Activated CD4-positive, alpha-beta memory T cell treated with anti-CD3 and anti-CD28 coated beads for 36 hours (primary cell): ENCODE measurements at regions of chr20 and their contacts with region 1.

Region 1: GRCh38 chr20:50338479-50339391 is 148.1 kb downstream of the CEBPB start:
- DNase-seq: peak; percentile 91
- H3K4me3 Mint-ChIP-seq: peak overlapping the region; percentile 63
- H3K27ac Mint-ChIP-seq: peak overlapping the region; percentile 96
- H3K4me1 Mint-ChIP-seq: peaks cover 37% of the 10 kb centered on the region
- H3K27me3 Mint-ChIP-seq: no peaks in the 10 kb centered on the region

Region 2: GRCh38 chr20:50286609-50287008 is 52.1 kb before region 1 on chr20:
- CTCF ChIA-PET with region 1: interaction called, 11 read pairs
- POLR2A ChIA-PET with region 1: interaction called, 26 read pairs
- intact Hi-C with region 1: loop called (anchors 1 kb)
- DNase-seq: peak; percentile 63
- H3K4me3 Mint-ChIP-seq: no peak overlapping the region
- H3K27ac Mint-ChIP-seq: peak overlapping the region; percentile 84
- H3K4me1 Mint-ChIP-seq: peaks cover 34% of the 10 kb centered on the region
- H3K27me3 Mint-ChIP-seq: peaks cover 5% of the 10 kb centered on the region

Region 3: DNA sequence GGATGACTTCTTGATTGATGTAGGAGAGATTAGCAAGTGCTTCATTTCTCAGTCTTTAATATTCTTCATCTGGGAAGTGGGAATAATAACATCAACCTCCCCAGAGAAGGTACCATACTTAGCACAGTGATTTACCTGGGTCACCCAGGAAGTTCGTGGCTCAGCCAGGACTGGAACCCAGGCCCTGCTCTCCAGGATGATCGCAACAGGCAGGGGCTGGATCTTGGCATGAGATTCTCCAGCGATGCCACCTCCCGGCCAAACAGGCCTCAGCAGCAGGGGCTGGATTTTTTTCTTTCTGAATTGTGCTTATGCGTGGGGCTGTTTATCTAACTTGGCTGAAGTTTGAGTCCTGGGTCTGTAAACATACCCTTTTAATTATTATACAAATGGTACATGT is 41.9 kb after region 1 on chr20:
- CTCF ChIA-PET with region 1: no interaction called
- POLR2A ChIA-PET with region 1: interaction called, 7 read pairs
- intact Hi-C with region 1: loop called (anchors 5 kb)
- DNase-seq: no peak
- H3K4me3 Mint-ChIP-seq: no peak overlapping the region
- H3K27ac Mint-ChIP-seq: no peak overlapping the region
- H3K4me1 Mint-ChIP-seq: peaks cover 42% of the 10 kb centered on the region
- H3K27me3 Mint-ChIP-seq: no peaks in the 10 kb centered on the region

Region 4: DNA sequence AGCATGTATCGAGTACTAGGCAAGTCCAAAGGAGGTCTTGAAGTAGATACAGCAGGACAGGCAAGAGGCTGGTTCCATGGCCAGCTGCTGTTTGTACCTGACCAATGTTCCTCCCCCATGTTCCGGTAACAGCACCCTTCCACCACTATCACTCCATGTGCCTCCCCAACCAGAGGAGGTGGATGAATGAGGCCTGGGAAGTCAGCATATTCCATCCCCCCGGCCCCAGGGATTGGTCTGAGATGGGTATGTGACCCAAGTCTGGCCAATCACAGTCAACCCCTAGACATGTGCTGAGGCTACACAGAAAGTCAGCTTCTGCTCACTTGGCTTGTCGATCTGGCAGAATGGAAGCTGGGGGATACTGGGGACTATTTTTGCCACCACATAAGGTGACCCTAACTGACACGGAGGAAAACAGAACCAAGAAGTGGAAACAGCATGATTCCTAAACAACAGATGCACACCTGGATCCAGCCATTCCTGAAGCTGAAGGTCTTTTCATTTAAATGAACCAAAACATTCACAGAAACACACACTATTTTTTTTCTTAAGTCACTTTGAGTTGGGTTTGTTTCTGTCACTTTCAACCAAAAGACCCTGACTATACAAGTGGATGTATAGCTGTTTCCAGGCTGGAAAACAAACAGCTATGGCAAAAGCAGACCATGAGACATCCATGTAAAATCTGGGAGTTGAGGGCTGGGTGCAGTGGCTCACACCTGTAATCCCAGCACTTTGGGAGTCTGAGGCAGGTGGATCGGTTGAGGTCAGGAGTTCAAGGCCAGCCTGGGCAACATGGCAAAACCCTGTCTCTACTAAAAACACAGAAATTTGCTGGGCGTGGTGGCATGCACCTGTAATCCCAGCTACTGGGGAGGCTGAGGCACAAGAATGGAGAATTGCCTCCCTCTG is 101.1 kb after region 1 on chr20:
- CTCF ChIA-PET with region 1: no interaction called
- POLR2A ChIA-PET with region 1: no interaction called
- intact Hi-C with region 1: loop called (anchors 1 kb)
- DNase-seq: no peak
- H3K4me3 Mint-ChIP-seq: no peak overlapping the region
- H3K27ac Mint-ChIP-seq: peak overlapping the region; percentile 81
- H3K4me1 Mint-ChIP-seq: peaks cover 30% of the 10 kb centered on the region
- H3K27me3 Mint-ChIP-seq: no peaks in the 10 kb centered on the region

Region 5: DNA sequence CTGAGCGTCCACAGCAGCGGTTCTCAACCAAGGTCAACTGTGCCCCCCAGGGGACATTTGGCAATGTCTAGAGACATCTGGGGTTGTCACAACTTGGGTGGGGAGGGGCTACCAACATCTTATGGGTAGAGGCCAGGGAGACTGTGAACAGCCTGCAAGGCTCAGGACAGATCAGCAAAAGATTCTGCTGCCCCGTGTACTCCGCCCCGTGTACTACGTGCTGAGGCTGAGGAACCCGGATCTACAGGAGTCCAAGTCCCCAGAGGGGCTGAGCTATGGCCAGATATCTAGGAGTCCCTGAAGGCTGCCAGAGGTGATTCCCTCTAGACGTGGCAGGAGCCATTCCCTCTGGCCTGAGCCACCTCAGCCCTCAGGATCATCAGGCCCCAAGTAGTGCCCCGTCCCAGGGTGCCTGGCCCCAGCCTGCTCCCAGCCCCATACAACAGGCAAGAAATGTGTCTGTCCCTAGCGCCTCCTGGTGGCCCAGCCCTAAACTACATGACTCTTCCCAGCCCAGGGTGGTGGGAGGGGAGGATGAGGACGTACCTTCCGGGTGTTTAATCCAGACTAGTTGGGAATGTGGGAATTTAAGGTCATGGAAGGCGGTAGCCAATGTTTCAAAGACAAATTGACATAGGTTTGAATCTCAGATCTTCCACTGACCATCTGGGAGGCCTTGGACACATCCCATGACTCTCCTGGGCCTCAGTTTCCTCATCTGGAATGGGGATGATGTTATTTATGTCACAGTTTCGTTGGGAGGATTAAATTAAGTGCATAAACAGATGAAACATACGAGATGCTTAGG is 121.9 kb after region 1 on chr20:
- CTCF ChIA-PET with region 1: interaction called, 8 read pairs
- POLR2A ChIA-PET with region 1: no interaction called
- intact Hi-C with region 1: loop called (anchors 1 kb)
- DNase-seq: peak; percentile 90
- H3K4me3 Mint-ChIP-seq: no peak overlapping the region
- H3K27ac Mint-ChIP-seq: no peak overlapping the region
- H3K4me1 Mint-ChIP-seq: peaks cover 8% of the 10 kb centered on the region
- H3K27me3 Mint-ChIP-seq: peaks cover 12% of the 10 kb centered on the region

Region 6: DNA sequence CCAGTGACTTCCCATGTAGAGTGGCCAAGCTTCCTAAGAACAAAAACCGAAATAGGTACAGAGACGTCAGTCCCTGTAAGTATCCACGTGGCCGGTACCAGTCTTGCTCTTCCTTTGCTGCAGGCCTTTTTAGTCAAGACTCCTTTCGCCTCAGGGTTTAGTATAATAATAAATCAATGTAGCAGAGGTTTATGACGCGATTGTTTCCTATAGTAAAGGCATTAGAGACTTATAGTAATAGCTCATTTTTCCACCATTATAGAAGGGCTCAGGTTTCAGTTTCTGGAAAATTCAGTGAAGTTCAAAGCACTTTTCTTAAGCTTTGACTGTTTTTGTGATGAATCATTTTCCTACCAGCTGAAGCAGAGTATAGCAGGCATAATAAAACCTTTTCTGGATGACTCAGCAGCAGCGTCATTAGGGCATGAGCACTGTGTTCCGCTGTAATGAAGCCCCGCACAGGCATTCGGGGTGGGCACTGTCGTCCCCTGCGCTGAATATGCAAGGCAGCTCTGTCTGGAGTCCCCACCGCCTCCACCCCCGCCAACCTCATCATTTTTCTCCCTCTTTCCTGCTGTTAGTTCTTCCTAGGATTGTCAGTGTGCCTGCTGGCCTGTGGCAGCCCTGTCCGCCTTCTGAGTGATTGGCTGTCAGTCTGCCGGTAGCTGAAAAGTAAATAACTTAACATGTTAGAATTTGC is 222.8 kb after region 1 on chr20:
- CTCF ChIA-PET with region 1: no interaction called
- POLR2A ChIA-PET with region 1: no interaction called
- intact Hi-C with region 1: loop called (anchors 5 kb)
- DNase-seq: peak; percentile 86
- H3K4me3 Mint-ChIP-seq: peak overlapping the region; percentile 82
- H3K27ac Mint-ChIP-seq: peak overlapping the region; percentile 97
- H3K4me1 Mint-ChIP-seq: peaks cover 88% of the 10 kb centered on the region
- H3K27me3 Mint-ChIP-seq: no peaks in the 10 kb centered on the region